ENCODE measurements at regions of chr3 and their contacts with region 1.

Region 1: DNA sequence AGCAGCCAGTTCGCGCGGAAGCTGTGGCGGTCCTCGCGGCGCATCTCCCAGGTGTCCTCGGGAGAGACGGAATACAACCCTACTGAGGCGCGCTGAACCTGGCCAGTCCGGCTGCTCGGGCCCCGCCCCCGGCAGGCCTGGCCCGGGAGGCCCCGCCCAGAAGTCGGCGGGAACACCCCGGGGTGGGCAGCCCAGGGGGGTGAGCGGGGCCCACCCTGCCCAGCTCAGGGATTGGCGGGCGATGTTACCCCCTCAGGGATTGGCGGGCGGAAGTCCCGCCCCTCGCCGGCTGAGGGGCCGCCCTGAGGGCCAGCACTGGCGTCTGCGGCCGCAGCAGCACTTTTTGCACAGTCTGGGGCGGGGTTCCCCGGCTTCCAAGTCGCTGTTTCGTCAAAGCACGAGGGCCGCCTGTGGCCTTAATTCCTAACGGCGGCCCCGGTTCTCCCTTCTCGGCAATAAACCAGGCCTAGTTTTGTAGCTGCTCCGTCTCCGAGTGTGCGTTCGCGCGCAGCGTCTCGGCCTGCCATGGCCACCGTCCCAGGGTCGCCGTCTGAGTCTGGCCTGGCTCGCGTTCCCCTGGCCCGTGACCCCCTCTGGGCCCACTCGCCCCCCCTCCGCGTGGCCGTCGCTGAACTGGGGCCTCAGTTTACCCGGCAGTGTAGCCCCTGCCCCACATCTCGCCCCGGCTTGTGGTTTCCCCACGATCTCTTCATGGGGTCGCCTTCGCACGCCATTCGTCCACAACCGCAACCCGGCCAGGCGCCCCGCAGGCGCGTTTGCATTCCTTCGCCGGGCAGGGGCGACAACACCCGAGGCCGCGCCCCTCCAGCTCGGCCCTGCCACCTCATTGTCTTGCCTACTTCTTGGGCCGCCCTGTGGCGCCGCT is 30.0 kb downstream of the NBEAL2 start:
- DNase-seq: peak; percentile 89
- ATAC-seq: peak; percentile 97
- H3K4me3 Mint-ChIP-seq: peak overlapping the region; percentile 68
- H3K27ac Mint-ChIP-seq: peak overlapping the region; percentile 85
- H3K4me1 Mint-ChIP-seq: peaks cover 5% of the 10 kb centered on the region
- H3K27me3 Mint-ChIP-seq: no peaks in the 10 kb centered on the region
- CTCF ChIP-seq: no peak

Region 2: GRCh38 chr3:46960081-46960701 is 49.3 kb before region 1 on chr3:
- CTCF ChIA-PET with region 1: no interaction called
- POLR2A ChIA-PET with region 1: no interaction called
- intact Hi-C with region 1: no loop called
- DNase-seq: peak; percentile 28
- ATAC-seq: no peak
- H3K4me3 Mint-ChIP-seq: peak overlapping the region; percentile 46
- H3K27ac Mint-ChIP-seq: peak overlapping the region; percentile 96
- H3K4me1 Mint-ChIP-seq: peaks cover 77% of the 10 kb centered on the region
- H3K27me3 Mint-ChIP-seq: no peaks in the 10 kb centered on the region
- CTCF ChIP-seq: no peak

Region 3: DNA sequence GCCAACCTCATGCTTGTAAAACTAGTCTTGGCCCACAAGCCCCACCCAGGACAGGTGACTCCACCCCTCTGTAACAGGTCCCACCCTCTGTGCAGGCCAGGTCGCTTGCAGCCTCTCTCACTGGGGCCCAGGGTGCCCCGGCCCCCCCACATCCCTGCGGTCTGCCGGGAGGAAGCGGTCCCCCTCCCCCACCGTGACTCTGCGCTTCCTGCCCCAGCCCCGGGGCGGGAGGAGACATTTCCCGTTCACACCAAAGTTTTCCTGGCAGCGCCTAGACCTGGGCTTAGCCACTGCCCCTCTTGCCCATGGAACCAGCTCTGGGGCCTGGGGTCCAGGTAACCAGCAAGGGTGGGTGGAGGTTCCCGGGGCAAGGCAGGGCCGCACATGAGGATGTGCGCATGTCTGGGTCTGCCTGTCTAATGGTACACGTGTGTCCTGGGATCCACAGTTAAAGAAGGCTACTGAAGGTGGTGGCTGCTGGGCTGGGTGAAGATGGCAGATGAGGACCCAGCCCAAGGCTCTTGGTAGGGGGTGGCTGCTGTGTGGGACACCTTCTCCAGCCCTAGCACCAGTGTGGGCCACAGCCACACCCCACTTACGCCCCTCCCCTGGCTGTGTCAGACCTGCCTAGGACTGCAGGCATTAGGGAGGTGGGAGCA is 21.6 kb before region 1 on chr3:
- CTCF ChIA-PET with region 1: no interaction called
- POLR2A ChIA-PET with region 1: interaction called, 20 read pairs
- intact Hi-C with region 1: no loop called
- DNase-seq: peak; percentile 92
- ATAC-seq: peak; percentile 98
- H3K4me3 Mint-ChIP-seq: peak overlapping the region; percentile 67
- H3K27ac Mint-ChIP-seq: peak overlapping the region; percentile 89
- H3K4me1 Mint-ChIP-seq: peaks cover 63% of the 10 kb centered on the region
- H3K27me3 Mint-ChIP-seq: no peaks in the 10 kb centered on the region
- CTCF ChIP-seq: no peak

Measured in activated CD8-positive, alpha-beta T cell treated with anti-CD3 and anti-CD28 coated beads for 36 hours (primary cell).